PC-9 (cell line): ENCODE measurements at regions of chr3 and their contacts with region 1.

Region 1: GRCh38 chr3:148880681-148881080 is 15.6 kb downstream of the CPA3 start:
- DNase-seq: no peak
- H3K4me3 ChIP-seq: no peak overlapping the region
- H3K27ac ChIP-seq: no peak overlapping the region
- H3K4me1 ChIP-seq: no peaks in the 10 kb centered on the region
- H3K27me3 ChIP-seq: no peaks in the 10 kb centered on the region
- CTCF ChIP-seq: peak; percentile 43; the same call in 1 of the 2 replicates

Region 2: GRCh38 chr3:147507638-147508286 is 1372.9 kb before region 1 on chr3:
- CTCF ChIA-PET with region 1: no interaction called
- POLR2A ChIA-PET with region 1: no interaction called
- intact Hi-C with region 1: no loop called
- DNase-seq: no peak
- H3K4me3 ChIP-seq: no peak overlapping the region
- H3K27ac ChIP-seq: no peak overlapping the region
- H3K4me1 ChIP-seq: no peaks in the 10 kb centered on the region
- H3K27me3 ChIP-seq: no peaks in the 10 kb centered on the region
- CTCF ChIP-seq: no peak

Region 3: GRCh38 chr3:148551767-148552260 is 328.9 kb before region 1 on chr3:
- CTCF ChIA-PET with region 1: no interaction called
- POLR2A ChIA-PET with region 1: interaction called, 11 read pairs
- intact Hi-C with region 1: no loop called
- DNase-seq: no peak
- H3K4me3 ChIP-seq: no peak overlapping the region
- H3K27ac ChIP-seq: no peak overlapping the region
- H3K4me1 ChIP-seq: no peaks in the 10 kb centered on the region
- H3K27me3 ChIP-seq: no peaks in the 10 kb centered on the region
- CTCF ChIP-seq: no peak